ENCODE measurements at regions of chr7 and their contacts with region 1.

Region 1: DNA sequence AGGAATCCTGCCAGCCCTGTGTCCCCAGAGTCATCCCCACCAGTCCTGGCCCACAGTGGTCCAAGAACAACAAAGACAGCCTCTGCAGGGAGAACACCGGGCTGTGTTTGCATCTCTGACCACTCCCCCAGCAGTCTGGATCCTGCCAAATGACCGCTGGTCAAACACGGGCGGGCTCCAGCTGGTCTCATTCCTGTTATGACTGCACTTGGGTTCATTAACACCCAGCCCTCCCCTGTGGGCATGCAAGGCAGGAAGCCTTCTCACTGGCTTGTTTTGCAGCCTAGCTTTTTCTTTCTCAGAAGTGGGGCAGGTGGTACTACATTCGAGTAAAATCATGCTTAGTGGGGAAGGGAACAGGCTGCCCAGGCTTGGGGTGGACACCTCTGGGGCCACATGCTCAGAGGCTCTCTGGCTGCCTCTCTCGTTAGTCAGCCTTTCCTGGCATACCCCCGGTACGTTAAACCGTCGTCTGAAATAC is 190.0 kb downstream of the PLXNA4 start:
- DNase-seq: peak; percentile 72
- H3K4me3 ChIP-seq: no peak overlapping the region
- H3K27ac ChIP-seq: peak overlapping the region in 1 of 2 experiments; percentile 86; a peak in 2 of 4 replicates
- H3K4me1 ChIP-seq: peaks cover 0 to 60% of the 10 kb centered on the region in 2 experiments; a peak in 2 of 4 replicates
- H3K27me3 ChIP-seq: no peaks in the 10 kb centered on the region
- CTCF ChIP-seq: no peak
- EP300 ChIP-seq: peak in 1 of 2 experiments; percentile 59; a peak in 2 of 4 replicates
- RAD21 ChIP-seq: no peak; the same call in 1 of the 2 replicates

Region 2: GRCh38 chr7:132402751-132403245 is 16.6 kb after region 1 on chr7:
- CTCF ChIA-PET with region 1: interaction called, 34 read pairs
- POLR2A ChIA-PET with region 1: no interaction called
- DNase-seq: no peak
- H3K4me3 ChIP-seq: no peak overlapping the region
- H3K27ac ChIP-seq: no peak overlapping the region
- H3K4me1 ChIP-seq: peaks cover 4 to 35% of the 10 kb centered on the region in 2 experiments; a peak in 3 of 4 replicates
- H3K27me3 ChIP-seq: no peaks in the 10 kb centered on the region; the same call in 1 of the 2 replicates
- CTCF ChIP-seq: no peak
- EP300 ChIP-seq: no peak
- RAD21 ChIP-seq: no peak

Region 3: DNA sequence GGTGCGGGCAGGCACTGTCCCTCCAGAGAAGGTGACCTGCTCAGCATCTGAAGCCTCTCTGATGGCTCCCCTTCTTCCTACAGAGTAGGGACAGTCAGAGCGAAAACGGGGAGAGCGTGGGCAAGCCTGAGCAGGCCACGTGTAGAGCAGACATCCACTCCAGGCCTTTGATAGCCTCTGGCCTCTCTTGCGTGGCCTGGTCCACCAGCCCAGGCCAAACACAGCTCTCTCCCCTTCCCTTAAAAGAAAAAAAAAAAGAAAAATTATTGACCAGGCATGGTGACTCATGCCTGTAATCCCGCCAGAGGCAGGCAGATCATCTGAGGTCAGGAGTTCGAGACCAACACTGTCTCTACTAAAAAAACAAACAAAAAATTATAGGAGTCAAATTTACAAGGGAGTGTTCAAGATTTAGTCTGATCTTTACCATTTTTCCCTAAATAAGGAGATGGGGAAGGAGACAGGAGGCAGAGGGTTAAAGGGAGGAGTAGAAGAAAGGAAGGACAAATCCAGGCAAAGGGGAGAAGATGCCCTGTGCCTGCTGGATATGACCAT is 105.2 kb after region 1 on chr7:
- CTCF ChIA-PET with region 1: no interaction called
- POLR2A ChIA-PET with region 1: no interaction called
- DNase-seq: no peak
- H3K4me3 ChIP-seq: no peak overlapping the region
- H3K27ac ChIP-seq: peak overlapping the region in 1 of 2 experiments; percentile 72; a peak in 1 of 4 replicates
- H3K4me1 ChIP-seq: peaks cover 0 to 74% of the 10 kb centered on the region in 2 experiments; a peak in 1 of 4 replicates
- H3K27me3 ChIP-seq: no peaks in the 10 kb centered on the region
- CTCF ChIP-seq: no peak
- EP300 ChIP-seq: no peak; a peak in 1 of 4 replicates
- RAD21 ChIP-seq: no peak

Region 4: DNA sequence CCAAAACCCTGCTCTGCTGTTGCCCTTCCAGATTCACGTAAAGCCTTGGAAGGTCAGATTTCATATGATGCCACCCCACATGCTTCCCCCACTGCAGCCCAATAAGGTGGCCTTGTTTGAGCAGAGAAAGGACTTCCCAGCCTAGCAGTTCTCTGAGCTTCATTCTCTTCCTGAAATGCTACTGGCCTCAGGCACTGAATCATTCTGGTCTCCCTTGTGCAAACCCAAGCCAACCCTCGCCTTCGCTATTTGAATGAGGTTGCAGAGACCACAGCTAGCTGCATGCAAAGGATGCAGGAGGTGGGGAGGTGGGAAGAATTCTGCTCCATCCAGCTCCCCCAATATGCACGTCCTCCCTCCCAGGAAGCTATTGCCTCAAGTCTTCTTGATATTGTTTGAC is 250.4 kb after region 1 on chr7:
- CTCF ChIA-PET with region 1: no interaction called
- POLR2A ChIA-PET with region 1: no interaction called
- DNase-seq: no peak
- H3K4me3 ChIP-seq: no peak overlapping the region
- H3K27ac ChIP-seq: no peak overlapping the region
- H3K4me1 ChIP-seq: peaks cover 0 to 2% of the 10 kb centered on the region in 2 experiments; a peak in 1 of 4 replicates
- H3K27me3 ChIP-seq: no peaks in the 10 kb centered on the region; the same call in 1 of the 2 replicates
- CTCF ChIP-seq: no peak
- EP300 ChIP-seq: no peak
- RAD21 ChIP-seq: no peak